Cardiac septum (tissue), 1 donor: ENCODE measurements at regions of chr17 and their contacts with region 1.

Region 1: DNA sequence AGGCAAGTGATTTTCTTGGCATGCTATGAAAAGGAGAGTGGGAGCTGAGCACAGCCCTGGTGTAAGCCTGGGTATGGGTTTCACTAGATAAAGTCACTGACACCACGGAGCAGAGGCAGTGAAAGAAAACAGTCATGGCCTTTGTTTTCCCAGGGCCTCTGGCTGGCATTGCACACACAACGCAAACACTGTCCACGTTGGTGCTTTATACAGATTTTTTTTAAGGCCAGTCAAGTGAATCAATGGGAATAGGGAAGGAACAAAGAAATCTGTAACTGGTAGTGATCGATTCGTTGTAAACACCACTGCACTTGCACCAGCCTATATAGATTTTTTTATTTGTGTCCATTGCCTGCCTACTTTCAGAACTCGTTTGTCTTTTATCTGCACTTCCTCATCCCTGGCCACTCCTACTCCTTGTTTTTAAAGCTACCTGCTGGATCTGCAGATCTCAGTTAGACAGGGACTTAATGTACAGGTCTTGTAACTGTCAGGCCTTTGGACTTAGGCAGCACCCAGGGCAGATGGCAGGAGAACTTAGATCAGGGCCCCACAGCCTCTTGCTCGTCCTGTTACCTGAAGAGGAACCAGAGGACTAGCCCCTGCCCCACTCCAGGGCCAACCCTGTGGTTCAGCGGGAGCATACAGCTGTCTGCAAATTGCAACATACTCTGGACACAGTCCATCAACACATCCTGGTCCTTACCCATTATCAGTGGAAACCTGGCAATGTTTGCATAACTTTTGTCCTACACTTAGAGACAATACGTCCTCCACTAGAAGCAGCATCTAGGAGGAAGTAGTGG is 10.6 kb upstream of the TMIGD1 start:
- DNase-seq: peak; percentile 80

Region 2: DNA sequence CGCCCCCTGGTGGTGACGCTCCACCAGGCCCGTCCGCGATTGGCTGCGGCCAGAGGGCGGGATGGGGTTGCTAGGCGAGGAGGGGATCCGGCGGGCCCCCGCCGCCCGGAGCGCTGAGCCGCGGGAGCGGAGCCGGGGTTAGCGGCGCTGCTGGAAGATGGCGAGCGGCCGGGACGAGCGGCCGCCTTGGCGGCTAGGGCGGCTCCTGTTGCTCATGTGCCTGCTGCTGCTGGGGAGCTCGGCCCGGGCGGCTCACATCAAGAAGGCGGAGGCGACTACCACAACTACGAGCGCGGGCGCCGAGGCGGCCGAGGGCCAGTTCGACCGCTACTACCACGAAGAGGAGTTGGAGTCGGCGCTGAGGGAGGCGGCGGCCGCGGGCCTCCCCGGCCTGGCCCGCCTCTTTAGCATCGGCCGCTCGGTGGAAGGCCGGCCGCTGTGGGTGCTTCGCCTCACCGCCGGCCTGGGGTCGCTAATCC is 34.4 kb after region 1 on chr17 and contains the start of gene CPD:
- intact Hi-C with region 1: loop called (anchors 2 kb)
- DNase-seq: peak; percentile 99
- total RNA-seq, gene CPD: 20.7 TPM

Region 3: DNA sequence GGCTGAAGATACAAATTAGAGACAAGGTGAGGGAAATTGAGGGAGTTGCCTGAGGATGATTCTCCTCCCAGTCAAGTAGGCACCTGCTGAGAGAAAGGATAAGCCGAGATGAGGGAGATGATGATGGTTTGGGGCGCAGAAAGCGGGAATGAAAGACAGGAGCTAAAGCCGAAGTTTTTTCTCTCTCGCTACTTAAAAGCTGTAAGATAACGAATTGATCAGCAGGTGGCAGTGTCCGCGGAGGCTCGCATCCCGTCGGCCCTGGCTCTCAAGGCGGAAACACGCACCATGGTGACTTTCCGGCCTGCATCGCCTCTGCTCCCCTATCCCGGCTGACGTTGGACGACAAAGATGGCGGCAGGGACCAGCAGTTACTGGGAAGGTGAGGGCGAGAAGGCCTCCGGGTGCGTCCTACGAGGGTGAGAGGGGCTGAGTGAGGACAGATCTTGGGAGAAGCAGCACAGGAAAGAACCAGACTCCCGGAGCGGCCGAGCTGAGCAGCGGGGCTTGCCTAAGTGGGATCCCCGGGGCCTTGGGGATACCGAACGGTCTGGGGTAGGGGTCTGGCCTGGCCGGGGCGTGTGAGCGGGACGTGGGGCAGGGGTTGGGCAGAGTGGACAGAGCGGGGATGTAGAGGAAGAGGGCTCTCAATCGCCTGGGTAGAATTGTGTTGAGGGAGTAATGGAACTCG is 132.7 kb after region 1 on chr17 and contains the start of gene GOSR1:
- intact Hi-C with region 1: loop called (anchors 2 kb)
- DNase-seq: peak; percentile 98
- total RNA-seq, gene GOSR1: 35.3 TPM

Region 4: DNA sequence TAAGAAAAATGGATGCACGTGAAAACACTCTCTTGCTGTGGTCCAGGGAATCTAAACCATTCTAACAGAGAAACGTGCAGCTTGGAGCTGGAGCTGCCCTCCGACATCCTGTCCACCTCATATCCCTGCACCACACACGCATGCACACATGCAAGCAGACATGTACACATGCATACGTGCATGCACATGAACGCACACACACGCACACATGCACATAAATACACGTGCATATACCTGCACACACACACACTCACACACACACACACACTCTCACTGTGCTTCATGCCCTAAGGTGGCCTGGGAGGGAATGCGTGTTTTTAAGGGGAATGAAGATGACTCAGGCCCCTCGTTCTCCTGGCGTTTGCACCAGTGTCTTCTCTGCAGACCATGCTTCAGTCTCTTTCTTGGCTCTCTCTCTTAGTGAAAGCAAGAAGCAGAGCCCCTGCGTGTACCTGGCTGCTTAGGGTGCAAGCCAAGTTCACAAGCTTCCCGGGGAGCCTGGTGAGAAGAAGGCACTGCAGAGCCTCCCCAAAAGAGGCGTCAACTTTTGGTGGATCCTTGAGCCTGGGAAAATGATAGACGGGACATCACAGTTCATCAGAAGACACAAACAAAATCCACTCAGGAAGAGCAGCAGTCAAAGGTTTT is 205.5 kb after region 1 on chr17:
- intact Hi-C with region 1: loop called (anchors 10 kb)
- DNase-seq: no peak